Gastrocnemius medialis (tissue), 4 donors: ENCODE measurements at regions of chr14 and their contacts with region 1.

Region 1: DNA sequence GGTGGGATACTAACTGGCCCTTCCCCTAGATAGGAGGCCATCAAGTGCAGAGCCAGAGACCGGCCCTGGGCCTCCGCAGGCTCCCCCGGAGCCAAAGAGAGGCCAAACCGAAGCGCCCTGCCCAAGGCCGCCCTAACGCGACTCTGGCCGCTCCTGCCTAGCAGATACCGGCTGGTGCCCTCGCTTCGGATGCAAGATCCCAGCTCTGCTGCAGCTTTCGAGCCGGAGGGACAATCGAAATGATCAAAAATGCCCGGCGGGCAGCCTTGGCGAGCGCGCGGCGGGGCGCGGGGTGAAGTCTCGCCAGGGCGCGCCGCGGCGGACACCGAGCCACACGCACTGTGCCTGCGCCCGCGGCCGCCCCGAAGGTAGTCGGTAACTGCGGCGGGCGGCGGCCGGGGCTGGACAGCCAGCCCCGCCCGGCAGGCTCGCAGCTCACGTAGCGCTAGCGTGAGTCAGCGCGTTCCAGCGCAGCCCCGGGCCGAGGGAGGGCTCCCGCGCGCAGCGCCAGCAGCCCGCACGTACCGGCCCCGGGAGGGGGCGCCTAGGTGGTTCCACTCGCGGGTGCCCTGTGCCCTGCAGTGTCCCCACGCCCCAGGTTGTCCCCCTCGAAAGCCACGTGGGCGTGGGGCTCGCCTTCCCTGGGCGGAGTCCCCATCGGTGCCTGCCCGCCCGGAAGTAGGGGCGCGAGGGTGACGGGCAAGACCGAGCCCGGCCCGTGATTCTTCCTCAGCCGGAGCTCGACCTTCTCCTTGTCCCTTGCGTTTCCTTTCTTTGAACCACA is 109.2 kb upstream of the EGLN3 start:
- DNase-seq: peak; percentile 61 to 86
- ATAC-seq: peak; percentile 65 to 70
- H3K4me3 ChIP-seq: peak overlapping the region; percentile 62 to 87 (median 70)
- H3K27ac ChIP-seq: peak overlapping the region; percentile 91 to 97 (median 94)
- H3K4me1 ChIP-seq: peaks cover 24 to 34% of the 10 kb centered on the region in 2 donors
- H3K27me3 ChIP-seq: no peaks in the 10 kb centered on the region
- CTCF ChIP-seq: peak in 4 of 5 experiments; percentile 30 to 43 (median 42)
- POLR2A ChIP-seq: peak; percentile 80 to 89

Region 2: DNA sequence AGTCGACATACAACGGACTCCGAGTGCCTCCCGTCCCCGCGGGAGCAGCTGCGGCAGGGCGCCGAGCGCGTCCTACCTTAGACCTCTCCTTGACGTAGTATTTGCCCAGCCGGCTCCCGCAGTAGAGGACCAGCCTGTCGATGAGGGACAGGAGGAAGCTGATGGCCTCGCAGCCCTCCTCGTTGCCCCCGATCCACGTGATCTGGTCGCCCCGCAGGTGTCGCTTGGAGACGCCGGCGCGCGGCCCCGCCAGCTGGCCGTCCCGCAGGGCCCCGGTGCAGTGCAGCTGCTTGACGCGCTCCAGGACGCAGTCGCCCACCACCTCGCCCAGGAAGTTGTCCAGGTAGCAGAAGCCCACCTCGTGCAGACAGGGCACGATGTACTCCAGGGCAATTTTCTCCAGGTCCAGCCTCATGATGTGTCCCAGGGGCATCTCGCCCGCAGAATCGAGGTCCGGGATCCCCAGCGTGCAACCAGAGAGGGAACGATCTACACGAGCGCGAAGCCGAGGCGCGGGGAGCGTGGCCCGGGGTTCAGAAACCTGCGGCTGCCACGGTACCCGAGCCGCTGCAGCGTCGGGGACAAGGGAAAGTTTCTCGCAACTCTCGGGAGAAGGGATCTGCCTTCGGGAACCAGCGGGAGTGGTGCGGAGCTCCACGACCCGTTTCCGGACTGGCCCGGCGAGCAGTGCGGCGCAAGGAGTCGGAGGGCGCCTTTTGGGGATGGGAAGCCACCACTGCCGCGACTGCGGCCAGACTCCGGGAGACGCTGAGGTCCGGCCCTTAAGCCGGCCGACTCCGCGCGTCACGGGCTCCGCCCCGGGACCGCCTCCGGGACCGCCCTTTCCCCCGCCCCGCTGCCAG is 109.5 kb before region 1 on chr14 and contains the start of gene EGLN3:
- in situ Hi-C with region 1: no loop called
- intact Hi-C with region 1: loop called (anchors 2 kb)
- DNase-seq: peak; percentile 78 to 86
- ATAC-seq: peak; percentile 91 to 92
- H3K4me3 ChIP-seq: peak within 1 kb of the TSS; percentile 81 to 91 (median 83)
- H3K27ac ChIP-seq: peak within 1 kb of the TSS; percentile 78 to 88 (median 82)
- H3K4me1 ChIP-seq: peaks cover 11 to 14% of the 10 kb centered on the region in 2 donors
- H3K27me3 ChIP-seq: no peaks in the 10 kb centered on the region
- CTCF ChIP-seq: no peak
- POLR2A ChIP-seq: peak; percentile 96 to 99
- total RNA-seq, gene EGLN3: 9.4 to 15.7 (median 13.5) TPM

Region 3: DNA sequence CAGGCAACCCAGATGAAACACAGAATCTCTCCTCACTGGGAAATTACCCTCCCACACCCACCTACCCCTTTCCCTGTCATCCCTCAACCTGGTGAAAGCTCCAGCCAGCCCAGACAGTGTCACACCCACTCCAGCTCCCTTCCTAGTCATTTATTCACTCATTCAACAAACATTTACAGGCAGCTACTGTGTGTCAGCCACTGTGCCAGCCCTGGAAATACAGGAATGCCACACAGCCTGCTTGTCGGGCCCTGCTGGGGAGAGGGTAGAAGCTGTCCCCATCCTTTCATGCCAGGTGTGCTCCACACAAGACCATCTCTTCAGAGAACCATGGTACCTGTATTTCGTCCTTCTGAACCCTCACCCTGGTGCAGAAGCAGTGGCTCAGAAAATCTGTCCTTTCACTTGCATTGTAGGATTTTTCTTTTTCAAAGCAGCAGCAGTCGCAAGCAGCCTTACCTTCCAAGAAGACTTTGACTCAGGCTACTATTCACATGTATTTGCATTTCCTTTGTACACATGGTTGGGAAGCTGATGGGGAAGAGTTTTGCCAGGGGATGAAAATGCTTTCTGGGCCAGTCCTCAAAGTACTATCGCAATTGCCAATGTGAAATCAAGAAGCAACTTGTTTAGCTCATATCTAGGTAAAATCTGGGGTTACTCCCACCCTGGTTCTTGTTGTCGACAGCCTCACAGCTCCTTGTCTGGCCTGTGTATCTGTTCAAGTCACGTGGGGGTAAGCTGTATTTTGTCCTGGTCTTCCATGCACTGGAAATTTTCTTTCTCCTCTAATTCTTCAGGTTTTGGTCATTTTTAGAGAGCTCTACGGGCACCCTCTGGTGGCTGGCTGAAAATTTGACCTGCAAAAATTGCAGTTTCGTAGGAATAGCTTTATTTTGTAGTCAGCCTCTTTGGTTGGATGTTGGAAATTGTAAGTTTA is 38.3 kb after region 1 on chr14:
- in situ Hi-C with region 1: no loop called
- intact Hi-C with region 1: loop called (anchors 5 kb)
- DNase-seq: no peak
- ATAC-seq: peak; percentile 51 to 61
- H3K4me3 ChIP-seq: no peak overlapping the region
- H3K27ac ChIP-seq: no peak overlapping the region
- H3K4me1 ChIP-seq: no peaks in the 10 kb centered on the region
- H3K27me3 ChIP-seq: no peaks in the 10 kb centered on the region
- CTCF ChIP-seq: peak; percentile 34 to 57 (median 56)
- POLR2A ChIP-seq: no peak

Region 4: DNA sequence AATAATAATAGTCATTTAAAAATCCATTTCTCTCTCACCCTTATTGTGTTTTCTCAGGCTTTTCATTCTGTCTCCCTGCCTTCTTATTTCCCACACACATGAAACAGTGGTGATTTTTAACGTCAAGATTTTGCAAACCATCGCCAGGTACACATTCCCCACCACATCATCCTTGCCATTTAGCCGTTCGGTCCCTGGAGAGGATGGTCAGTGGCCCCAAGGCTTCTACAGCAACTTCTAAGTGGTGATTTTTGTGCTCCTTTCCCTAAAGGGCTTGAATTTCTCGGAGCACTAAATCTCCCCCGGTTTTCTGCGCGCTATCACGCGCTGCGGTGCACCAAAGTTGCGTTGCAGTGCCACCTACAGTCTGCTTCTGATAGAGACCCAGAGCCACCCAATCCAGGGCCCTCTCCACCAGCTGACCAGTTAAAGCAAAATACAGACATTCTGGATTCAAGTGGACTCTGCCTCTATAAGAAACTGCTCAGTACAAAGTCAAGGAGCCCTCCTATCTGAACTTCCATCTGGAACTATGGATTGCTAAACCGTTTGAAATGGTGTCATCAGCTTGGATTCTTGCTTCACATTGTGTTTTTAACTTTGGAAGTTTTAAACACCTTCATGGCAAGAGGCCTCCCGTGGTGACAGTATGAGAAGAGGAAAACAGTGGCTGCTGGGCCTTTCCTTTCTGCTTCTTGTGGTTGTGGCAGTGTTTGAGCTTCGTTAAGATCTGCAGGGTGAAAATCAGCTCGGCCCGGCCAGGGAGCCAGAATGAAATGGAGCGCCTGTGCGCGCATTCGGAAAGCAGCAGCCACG is 168.0 kb after region 1 on chr14:
- in situ Hi-C with region 1: no loop called
- intact Hi-C with region 1: loop called (anchors 2 kb)
- DNase-seq: peak; percentile 25 to 49
- ATAC-seq: peak; percentile 78 to 94
- H3K4me3 ChIP-seq: peak overlapping the region in 2 of 4 donors; percentile 24
- H3K27ac ChIP-seq: no peak overlapping the region
- H3K4me1 ChIP-seq: peaks cover 11 to 16% of the 10 kb centered on the region in 2 donors
- H3K27me3 ChIP-seq: no peaks in the 10 kb centered on the region
- CTCF ChIP-seq: peak; percentile 66 to 87 (median 85)
- POLR2A ChIP-seq: no peak